HEK293T (cell line): ENCODE measurements at regions of chr7 and their contacts with region 1.

Region 1: DNA sequence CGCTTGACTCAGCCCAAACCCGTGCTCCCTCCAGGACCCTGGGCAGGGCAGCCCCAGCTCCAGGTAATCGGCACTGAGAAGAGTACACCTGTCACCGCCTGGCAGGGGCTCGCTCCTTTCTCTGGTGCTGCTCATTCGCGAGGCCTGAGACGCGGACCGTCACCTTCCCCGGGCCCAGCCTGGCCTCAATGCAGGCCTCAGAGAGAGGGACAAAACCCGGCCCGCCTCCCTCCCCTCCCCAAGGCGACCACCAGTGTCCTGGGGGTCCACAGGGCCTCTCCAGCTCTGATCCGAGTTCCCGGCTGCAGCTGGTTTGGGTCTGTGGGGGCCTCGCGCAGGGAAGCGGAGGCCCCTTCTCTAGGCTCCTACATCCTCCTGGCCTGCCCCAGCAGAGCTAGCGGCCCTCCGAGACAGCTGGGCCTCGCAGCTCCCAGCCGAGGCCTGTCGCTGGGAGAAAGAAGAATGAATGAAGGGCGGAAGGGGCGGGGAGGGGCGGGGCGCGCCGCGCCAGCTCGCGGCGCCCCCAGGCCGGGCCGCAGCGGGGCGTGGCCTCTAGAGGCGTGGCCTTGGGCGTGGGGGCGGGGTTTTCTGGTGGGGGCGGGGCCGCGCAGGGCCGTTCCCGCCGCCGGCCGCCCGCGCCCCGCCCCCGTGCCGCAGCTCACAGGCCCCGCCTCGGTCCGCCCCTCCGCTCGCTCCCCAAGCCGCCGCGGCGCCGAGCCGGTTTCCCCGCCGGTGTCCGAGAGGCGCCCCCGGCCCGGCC is at the start of gene LIMK1:
- DNase-seq: peak; percentile 95

Region 2: GRCh38 chr7:74069790-74070618 is 13.3 kb before region 1 on chr7:
- CTCF ChIA-PET with region 1: interaction called, 11 read pairs
- POLR2A ChIA-PET with region 1: interaction called, 5 read pairs
- DNase-seq: no peak

Region 3: GRCh38 chr7:74173866-74174605 is 90.7 kb after region 1 on chr7 and contains the start of gene EIF4H:
- CTCF ChIA-PET with region 1: interaction called, 3 read pairs
- POLR2A ChIA-PET with region 1: interaction called, 12 read pairs
- DNase-seq: peak; percentile 92